Cardiac septum (tissue), 1 donor: ENCODE measurements at regions of chr2 and their contacts with region 1.

Region 1: DNA sequence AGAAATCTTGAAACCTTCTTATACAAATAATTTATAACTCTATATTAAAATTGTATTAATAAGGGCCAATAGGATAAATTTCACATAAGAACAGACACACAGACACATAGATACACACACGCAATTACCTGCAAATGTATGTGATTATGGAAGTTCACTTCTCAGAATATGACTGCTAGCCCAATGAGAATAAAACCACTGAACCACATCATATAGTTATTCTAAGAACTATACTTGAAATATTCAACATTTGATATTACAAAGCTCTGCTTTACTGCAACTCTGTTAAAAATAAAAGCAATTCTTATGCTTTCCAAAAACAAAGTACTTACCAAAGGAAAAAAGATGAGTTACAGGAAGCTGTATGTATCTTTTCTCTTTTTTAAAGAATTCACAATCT is 51.1 kb downstream of the PGAP1 start:
- DNase-seq: no peak

Region 2: DNA sequence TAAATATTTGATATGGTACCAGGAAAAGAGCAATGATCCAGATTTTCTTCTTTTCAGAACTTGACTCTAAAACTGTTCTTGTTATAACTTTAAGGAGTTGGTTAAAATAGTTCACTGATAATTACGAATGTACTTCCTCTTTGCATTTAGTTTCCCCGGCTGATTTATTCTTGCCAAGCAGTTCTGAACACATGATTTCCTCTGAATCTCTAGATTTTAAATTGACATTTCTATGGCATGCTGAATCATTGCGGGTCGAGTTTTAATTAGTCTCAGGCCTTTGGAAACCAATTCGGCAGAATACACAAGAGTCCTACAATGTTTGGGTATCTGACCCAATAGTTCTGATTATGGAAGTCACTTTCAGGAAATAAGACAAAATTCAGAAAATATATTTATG is 769.5 kb before region 1 on chr2:
- intact Hi-C with region 1: no loop called
- DNase-seq: no peak

Region 3: DNA sequence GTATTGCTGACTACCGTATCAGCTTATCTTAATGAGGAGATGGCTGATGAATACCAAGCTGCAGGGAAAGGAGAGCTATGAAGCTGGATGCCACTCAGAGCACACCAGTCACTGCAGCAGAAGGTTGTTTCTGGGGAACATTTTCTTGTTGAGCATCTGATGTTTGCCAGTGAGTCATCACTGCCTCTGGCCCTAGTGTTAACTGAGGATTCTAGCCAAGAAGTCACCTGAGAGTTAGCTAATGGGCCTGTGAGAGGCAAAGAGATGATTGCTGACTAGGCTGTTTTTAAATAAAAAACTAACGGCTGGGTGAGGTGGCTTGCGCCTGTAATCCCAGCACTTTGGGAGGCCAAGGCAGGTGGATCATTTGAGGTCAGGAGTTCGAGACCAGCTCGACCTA is 198.0 kb before region 1 on chr2:
- intact Hi-C with region 1: no loop called
- DNase-seq: no peak

Region 4: DNA sequence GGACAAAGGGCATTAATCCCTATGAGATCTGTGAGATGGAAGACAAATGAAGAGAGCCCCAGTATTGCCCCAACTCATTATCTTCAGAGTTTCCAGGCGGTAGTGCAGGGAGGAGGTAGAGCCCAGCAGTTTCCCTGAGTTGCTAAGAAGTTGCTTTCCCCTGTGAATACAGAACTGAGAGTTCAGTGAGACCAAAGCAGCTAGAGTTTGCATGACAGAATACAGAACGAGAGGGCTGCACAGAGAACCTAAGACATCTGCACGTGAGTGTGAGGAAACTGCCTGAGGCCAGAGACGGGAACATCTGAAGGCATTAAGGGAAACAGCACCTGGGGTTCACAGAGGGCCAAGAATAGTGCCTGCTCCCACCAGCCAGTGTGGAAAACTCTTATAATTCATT is 69.2 kb after region 1 on chr2:
- intact Hi-C with region 1: loop called (anchors 10 kb)
- DNase-seq: no peak